ENCODE measurements at regions of chr10 and their contacts with region 1.

Region 1: DNA sequence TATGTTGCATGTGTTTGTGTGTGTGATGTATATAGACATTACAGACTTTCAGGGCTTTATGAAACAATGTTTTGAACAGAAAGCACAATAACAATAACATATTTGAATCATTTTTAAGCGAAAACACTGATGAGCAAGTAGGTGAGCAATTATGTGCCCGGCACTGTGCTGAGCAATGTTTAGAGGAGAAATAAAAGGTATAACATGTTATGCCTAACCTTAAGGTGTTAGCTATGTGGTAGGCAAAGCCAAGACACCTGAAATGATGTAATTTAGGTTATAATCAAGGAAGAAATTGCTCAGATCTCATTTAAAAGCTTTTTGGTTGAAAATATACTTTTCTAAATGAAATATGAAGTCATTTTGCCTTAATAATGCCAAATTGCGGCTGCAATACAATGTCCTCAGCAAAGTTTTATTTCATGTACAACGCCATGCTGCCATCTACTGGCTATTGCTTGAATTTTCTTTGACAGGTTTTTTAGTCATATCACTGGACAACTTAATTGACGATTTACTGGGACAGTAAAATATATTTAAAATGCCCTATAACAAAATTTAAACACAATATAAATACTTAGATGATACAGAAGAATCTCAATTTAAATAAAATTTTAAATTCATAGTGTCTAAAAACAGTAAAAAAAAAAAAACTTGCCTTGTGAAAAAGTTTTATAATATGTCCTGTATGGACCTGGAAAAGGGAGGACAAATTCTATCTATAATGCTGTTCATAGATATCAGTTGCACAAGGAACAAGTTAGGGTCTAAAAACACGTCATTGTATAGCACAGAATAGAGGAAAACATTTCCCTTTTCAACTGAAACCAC is 131.1 kb upstream of the CDK1 start:
- DNase-seq: peak; percentile 68
- ATAC-seq: peak; percentile 61
- H3K4me3 ChIP-seq: no peak overlapping the region
- H3K4me3 Mint-ChIP-seq: no peak overlapping the region
- H3K27ac ChIP-seq: no peak overlapping the region
- H3K27ac Mint-ChIP-seq: no peak overlapping the region
- H3K4me1 ChIP-seq: peaks cover 0 to 2% of the 10 kb centered on the region in 2 donors
- H3K4me1 Mint-ChIP-seq: peaks cover 6% of the 10 kb centered on the region
- H3K27me3 ChIP-seq: no peaks in the 10 kb centered on the region
- H3K27me3 Mint-ChIP-seq: no peaks in the 10 kb centered on the region
- CTCF ChIP-seq: peak; percentile 92

Region 2: GRCh38 chr10:60105295-60105695 is 541.9 kb before region 1 on chr10:
- CTCF ChIA-PET with region 1: interaction called, 134 read pairs
- POLR2A ChIA-PET with region 1: no interaction called
- intact Hi-C with region 1: loop called (anchors 1 kb)
- DNase-seq: no peak
- ATAC-seq: no peak
- H3K4me3 ChIP-seq: no peak overlapping the region
- H3K4me3 Mint-ChIP-seq: no peak overlapping the region
- H3K27ac ChIP-seq: no peak overlapping the region
- H3K27ac Mint-ChIP-seq: no peak overlapping the region
- H3K4me1 ChIP-seq: no peaks in the 10 kb centered on the region
- H3K4me1 Mint-ChIP-seq: no peaks in the 10 kb centered on the region
- H3K27me3 ChIP-seq: no peaks in the 10 kb centered on the region
- H3K27me3 Mint-ChIP-seq: peaks cover under 1% of the 10 kb centered on the region
- CTCF ChIP-seq: no peak

Region 3: GRCh38 chr10:60208676-60209269 is 438.4 kb before region 1 on chr10:
- CTCF ChIA-PET with region 1: interaction called, 14 read pairs
- POLR2A ChIA-PET with region 1: no interaction called
- intact Hi-C with region 1: loop called (anchors 1 kb)
- DNase-seq: peak; percentile 36
- ATAC-seq: no peak
- H3K4me3 ChIP-seq: no peak overlapping the region
- H3K4me3 Mint-ChIP-seq: no peak overlapping the region
- H3K27ac ChIP-seq: no peak overlapping the region
- H3K27ac Mint-ChIP-seq: no peak overlapping the region
- H3K4me1 ChIP-seq: peaks cover 14 to 26% of the 10 kb centered on the region in 2 donors
- H3K4me1 Mint-ChIP-seq: peaks cover 37% of the 10 kb centered on the region
- H3K27me3 ChIP-seq: no peaks in the 10 kb centered on the region
- H3K27me3 Mint-ChIP-seq: no peaks in the 10 kb centered on the region
- CTCF ChIP-seq: peak; percentile 67

Region 4: GRCh38 chr10:60350400-60350799 is 296.8 kb before region 1 on chr10:
- CTCF ChIA-PET with region 1: no interaction called
- POLR2A ChIA-PET with region 1: no interaction called
- intact Hi-C with region 1: no loop called
- DNase-seq: no peak
- ATAC-seq: no peak
- H3K4me3 ChIP-seq: no peak overlapping the region
- H3K4me3 Mint-ChIP-seq: peak overlapping the region; percentile 77
- H3K27ac ChIP-seq: peak overlapping the region; percentile 83 to 84
- H3K27ac Mint-ChIP-seq: peak overlapping the region; percentile 76
- H3K4me1 ChIP-seq: peaks cover 40 to 41% of the 10 kb centered on the region in 2 donors
- H3K4me1 Mint-ChIP-seq: peaks cover 51% of the 10 kb centered on the region
- H3K27me3 ChIP-seq: no peaks in the 10 kb centered on the region
- H3K27me3 Mint-ChIP-seq: no peaks in the 10 kb centered on the region
- CTCF ChIP-seq: no peak

Region 5: DNA sequence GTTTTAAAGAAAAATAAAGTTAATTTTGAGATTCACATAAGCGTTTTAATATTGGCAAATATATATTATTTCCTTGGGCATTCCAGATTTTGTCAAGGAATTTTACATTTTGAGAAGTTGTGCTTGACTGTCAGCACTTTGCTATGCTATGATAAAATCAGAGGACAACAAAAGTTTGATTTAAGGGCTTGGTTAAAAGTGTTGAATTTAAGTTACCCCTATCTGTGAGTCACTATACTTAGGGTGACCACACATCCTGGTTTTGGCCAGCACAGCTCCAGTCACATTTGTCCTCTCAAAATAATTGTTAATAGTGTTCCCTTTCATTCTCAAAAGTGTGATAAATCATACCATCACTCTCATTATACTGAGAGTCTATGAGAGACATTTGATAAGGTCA is 223.3 kb before region 1 on chr10:
- CTCF ChIA-PET with region 1: no interaction called
- POLR2A ChIA-PET with region 1: no interaction called
- intact Hi-C with region 1: no loop called
- DNase-seq: no peak
- ATAC-seq: no peak
- H3K4me3 ChIP-seq: no peak overlapping the region
- H3K4me3 Mint-ChIP-seq: no peak overlapping the region
- H3K27ac ChIP-seq: no peak overlapping the region
- H3K27ac Mint-ChIP-seq: no peak overlapping the region
- H3K4me1 ChIP-seq: peaks cover 0 to 9% of the 10 kb centered on the region in 2 donors
- H3K4me1 Mint-ChIP-seq: peaks cover 6% of the 10 kb centered on the region
- H3K27me3 ChIP-seq: no peaks in the 10 kb centered on the region
- H3K27me3 Mint-ChIP-seq: no peaks in the 10 kb centered on the region
- CTCF ChIP-seq: no peak

Region 6: DNA sequence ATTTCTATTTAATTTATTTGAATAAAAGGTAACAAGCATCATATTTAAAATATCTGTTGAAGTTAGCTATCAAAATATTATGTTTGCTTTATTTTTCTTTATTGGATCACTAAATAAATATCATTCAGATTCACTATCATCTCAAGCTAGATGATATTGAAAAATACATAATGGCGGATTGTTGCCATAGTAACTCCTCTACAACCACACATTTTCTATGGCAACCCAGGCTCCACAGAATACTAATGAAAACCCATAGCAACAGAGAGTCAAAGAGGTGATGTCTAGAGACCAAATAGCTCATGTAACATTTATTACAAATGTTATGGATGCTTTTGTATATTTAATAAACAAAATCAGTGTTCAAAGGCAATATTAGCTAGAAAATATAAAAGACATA is 17.8 kb before region 1 on chr10:
- CTCF ChIA-PET with region 1: interaction called, 16 read pairs
- POLR2A ChIA-PET with region 1: no interaction called
- intact Hi-C with region 1: no loop called
- DNase-seq: no peak
- ATAC-seq: no peak
- H3K4me3 ChIP-seq: no peak overlapping the region
- H3K4me3 Mint-ChIP-seq: no peak overlapping the region
- H3K27ac ChIP-seq: no peak overlapping the region
- H3K27ac Mint-ChIP-seq: no peak overlapping the region
- H3K4me1 ChIP-seq: no peaks in the 10 kb centered on the region
- H3K4me1 Mint-ChIP-seq: no peaks in the 10 kb centered on the region
- H3K27me3 ChIP-seq: no peaks in the 10 kb centered on the region
- H3K27me3 Mint-ChIP-seq: peaks cover 22% of the 10 kb centered on the region
- CTCF ChIP-seq: no peak

Region 7: DNA sequence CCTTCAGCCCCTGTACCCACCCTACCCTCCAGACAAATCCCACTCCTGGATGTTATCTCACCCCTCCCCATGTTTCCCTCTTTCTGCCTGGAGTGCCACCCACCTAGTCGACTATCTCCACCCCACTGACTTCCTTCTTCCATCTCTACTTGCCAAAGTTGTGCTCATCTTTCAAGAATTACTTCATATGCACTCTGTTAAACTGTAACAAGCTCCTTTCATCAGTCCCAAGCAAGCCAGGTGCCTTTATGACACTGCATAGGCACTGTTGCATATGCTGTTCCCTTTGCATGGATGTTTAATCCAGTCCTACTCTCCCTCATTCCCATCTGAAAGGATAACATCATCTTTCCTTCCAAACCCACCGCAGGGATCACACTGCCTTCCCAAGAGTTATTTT is 122.2 kb after region 1 on chr10:
- CTCF ChIA-PET with region 1: interaction called, 14 read pairs
- POLR2A ChIA-PET with region 1: no interaction called
- intact Hi-C with region 1: no loop called
- DNase-seq: no peak
- ATAC-seq: no peak
- H3K4me3 ChIP-seq: no peak overlapping the region
- H3K4me3 Mint-ChIP-seq: no peak overlapping the region
- H3K27ac ChIP-seq: no peak overlapping the region
- H3K27ac Mint-ChIP-seq: no peak overlapping the region
- H3K4me1 ChIP-seq: no peaks in the 10 kb centered on the region
- H3K4me1 Mint-ChIP-seq: peaks cover 2% of the 10 kb centered on the region
- H3K27me3 ChIP-seq: no peaks in the 10 kb centered on the region
- H3K27me3 Mint-ChIP-seq: no peaks in the 10 kb centered on the region
- CTCF ChIP-seq: no peak